ENCODE measurements at regions of chr19 and their contacts with region 1.

Region 1: GRCh38 chr19:39403331-39404312 is 3.0 kb upstream of the ZFP36 start:
- DNase-seq: peak; percentile 99
- ATAC-seq: peak; percentile 59
- H3K4me3 ChIP-seq: peak overlapping the region; percentile 29
- H3K27ac ChIP-seq: peak overlapping the region; percentile 95
- H3K4me1 ChIP-seq: peaks cover 26% of the 10 kb centered on the region
- H3K27me3 ChIP-seq: no peaks in the 10 kb centered on the region
- CTCF ChIP-seq: no peak
- POLR2A ChIP-seq: peak; percentile 82
- RAD21 ChIP-seq: peak; percentile 16; the same call in 1 of the 2 replicates

Region 2: DNA sequence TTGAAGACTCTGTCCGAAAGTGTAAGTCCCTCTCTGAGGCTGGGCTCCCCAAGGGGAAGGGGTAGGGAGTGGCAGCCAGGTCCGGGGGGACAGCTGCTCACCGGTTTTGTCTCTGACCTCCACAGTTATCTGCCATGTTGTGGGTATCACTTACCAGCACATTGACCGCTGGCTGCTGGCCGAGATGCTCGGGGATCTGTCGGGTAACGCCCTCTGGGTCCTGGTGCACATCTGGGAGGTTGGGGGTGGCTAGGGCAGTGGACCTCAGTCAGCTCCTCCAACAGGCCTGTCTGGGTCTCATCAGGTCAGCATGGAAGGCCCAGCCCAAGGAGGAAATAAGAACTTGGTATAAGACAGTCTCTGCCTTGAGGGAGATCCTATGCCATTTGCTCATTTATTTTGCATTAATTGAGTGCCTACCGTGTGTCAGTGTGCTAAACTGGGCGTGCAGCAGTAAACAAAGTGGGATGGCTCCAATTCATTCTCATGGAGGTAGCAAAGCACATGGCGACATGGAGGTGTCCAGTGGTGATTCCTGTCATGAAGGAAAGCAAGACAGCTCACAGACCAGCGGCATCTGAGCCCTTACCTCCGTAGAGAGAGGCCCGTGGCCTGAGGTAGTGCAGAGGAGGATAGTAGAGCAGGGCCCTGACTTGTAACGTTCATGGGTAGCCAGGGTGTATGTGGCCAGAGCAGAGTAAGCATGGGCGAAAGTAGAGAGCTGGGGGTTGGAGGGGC is 771.0 kb before region 1 on chr19:
- CTCF ChIA-PET with region 1: no interaction called
- POLR2A ChIA-PET with region 1: no interaction called
- dilution Hi-C with region 1: no loop called
- in situ Hi-C with region 1: no loop called
- intact Hi-C with region 1: no loop called
- DNase-seq: no peak
- ATAC-seq: no peak
- H3K4me3 ChIP-seq: no peak overlapping the region
- H3K27ac ChIP-seq: no peak overlapping the region
- H3K4me1 ChIP-seq: no peaks in the 10 kb centered on the region
- H3K27me3 ChIP-seq: no peaks in the 10 kb centered on the region
- CTCF ChIP-seq: no peak
- POLR2A ChIP-seq: no peak
- RAD21 ChIP-seq: no peak

Region 3: GRCh38 chr19:39384839-39385568 is 18.6 kb before region 1 on chr19:
- CTCF ChIA-PET with region 1: no interaction called
- POLR2A ChIA-PET with region 1: interaction called, 14 read pairs
- dilution Hi-C with region 1: no loop called
- in situ Hi-C with region 1: no loop called
- intact Hi-C with region 1: no loop called
- DNase-seq: no peak
- ATAC-seq: no peak
- H3K4me3 ChIP-seq: no peak overlapping the region
- H3K27ac ChIP-seq: no peak overlapping the region
- H3K4me1 ChIP-seq: peaks cover 5% of the 10 kb centered on the region
- H3K27me3 ChIP-seq: no peaks in the 10 kb centered on the region
- CTCF ChIP-seq: no peak
- POLR2A ChIP-seq: no peak; the same call in 1 of the 2 replicates
- RAD21 ChIP-seq: no peak

Region 4: GRCh38 chr19:39445265-39446111 is 41.9 kb after region 1 on chr19 and contains the start of gene SUPT5H:
- CTCF ChIA-PET with region 1: interaction called, 3 read pairs
- POLR2A ChIA-PET with region 1: interaction called, 12 read pairs
- dilution Hi-C with region 1: no loop called
- in situ Hi-C with region 1: no loop called
- intact Hi-C with region 1: no loop called
- DNase-seq: peak; percentile 97
- ATAC-seq: peak; percentile 96
- H3K4me3 ChIP-seq: peak within 1 kb of the TSS; percentile 83
- H3K27ac ChIP-seq: peak within 1 kb of the TSS; percentile 96
- H3K4me1 ChIP-seq: peaks cover 5% of the 10 kb centered on the region
- H3K27me3 ChIP-seq: no peaks in the 10 kb centered on the region
- CTCF ChIP-seq: no peak
- POLR2A ChIP-seq: peak; percentile 94
- RAD21 ChIP-seq: no peak
- total RNA-seq, gene SUPT5H: 75.3 and 86.9 TPM in 2 replicates

Measured in IMR-90 (cell line).